Esophagus muscularis mucosa (tissue), 4 donors: ENCODE measurements at regions of chr1 and their contacts with region 1.

Region 1: DNA sequence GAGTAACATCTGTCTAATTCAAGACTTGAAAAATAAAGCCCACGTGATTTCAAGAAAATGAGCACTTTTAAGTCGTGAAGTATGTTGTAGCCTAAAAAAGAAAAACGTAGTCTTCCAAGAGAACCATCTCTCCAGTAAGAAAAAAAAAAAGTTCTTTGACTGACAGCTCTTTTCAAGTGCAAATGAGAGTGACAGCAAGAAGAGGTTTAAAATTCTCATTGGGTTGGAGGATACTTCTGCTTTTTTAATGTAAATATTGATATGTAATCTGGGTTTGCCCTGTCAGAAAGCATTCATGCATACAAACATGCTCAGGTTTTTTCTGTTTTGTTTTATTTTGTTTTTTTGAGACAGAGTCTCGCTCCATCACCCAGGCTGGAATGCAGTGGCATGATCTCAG is 32.3 kb upstream of the PRDM2 start:
- DNase-seq: no peak
- H3K4me3 ChIP-seq: no peak overlapping the region
- H3K27ac ChIP-seq: no peak overlapping the region
- H3K4me1 ChIP-seq: peaks cover 0 to 9% (median 5%) of the 10 kb centered on the region in 4 donors
- H3K27me3 ChIP-seq: peaks cover 0 to 13% (median 0%) of the 10 kb centered on the region in 4 donors
- CTCF ChIP-seq: no peak
- EP300 ChIP-seq: no peak
- POLR2A ChIP-seq: no peak

Region 2: DNA sequence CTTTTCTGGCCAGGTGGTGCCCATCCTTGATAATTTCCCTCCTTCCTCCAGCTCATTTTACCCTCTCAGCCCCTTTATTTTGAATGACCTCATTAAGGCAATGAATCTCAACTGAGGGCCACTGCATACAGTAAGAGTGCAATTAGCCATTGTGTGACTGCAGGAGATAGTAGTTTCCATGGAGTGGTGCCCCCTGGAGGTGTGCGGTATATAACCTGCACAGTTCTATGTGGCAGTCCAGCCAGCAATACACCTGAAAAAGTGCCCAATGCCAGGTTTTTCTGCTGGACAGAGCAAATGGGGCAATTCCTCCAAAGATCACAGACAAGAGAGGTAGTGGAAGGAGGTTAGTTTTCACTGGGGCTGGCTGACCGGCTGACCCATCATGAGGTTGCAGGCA is 128.0 kb before region 1 on chr1:
- intact Hi-C with region 1: no loop called
- DNase-seq: no peak
- H3K4me3 ChIP-seq: no peak overlapping the region
- H3K27ac ChIP-seq: no peak overlapping the region
- H3K4me1 ChIP-seq: peaks cover 8 to 22% (median 20%) of the 10 kb centered on the region in 4 donors
- H3K27me3 ChIP-seq: no peaks in the 10 kb centered on the region
- CTCF ChIP-seq: no peak
- EP300 ChIP-seq: no peak
- POLR2A ChIP-seq: no peak

Region 3: DNA sequence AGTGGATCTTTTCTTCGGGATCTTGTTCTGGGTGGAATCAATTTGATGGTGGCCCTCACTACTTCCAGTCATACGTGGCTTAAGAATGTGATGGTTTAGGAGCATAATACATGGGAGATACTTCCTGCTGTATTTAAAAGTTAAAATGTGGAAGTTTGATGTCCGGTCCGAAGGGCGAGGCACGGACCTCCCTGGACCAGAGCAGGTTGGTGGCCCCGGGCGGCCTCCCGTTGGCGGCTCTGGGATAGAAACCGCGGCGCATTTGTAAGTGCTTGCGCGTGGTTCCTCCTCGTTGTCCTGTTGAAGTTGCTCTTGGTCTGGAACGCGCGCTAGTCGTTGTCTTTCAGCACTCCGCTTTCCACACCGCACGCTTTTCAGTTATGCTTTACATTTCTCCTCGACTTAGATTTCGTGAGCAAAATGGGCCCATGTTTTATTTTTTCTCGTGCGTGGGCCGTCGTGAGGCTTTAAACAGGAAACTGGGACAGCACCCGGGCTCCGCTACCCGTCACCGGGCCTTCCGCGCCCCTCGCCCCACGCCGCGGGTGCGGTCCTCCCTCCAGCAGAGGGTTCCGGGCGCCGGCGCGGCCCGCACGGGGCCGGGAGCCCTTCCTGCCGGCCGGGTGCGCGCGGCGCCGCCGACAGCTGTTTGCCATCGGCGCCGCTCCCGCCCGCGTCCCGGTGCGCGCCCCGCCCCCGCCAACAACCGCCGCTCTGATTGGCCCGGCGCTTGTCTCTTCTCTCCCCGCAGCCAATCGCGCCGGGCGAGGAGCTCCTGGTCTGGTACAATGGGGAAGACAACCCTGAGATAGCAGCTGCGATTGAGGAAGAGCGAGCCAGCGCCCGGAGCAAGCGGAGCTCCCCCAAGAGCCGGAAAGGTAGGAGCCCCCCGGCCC is 81.2 kb after region 1 on chr1:
- intact Hi-C with region 1: no loop called
- DNase-seq: peak; percentile 99
- H3K4me3 ChIP-seq: peak overlapping the region; percentile 64 to 97 (median 89)
- H3K27ac ChIP-seq: peak overlapping the region; percentile 89 to 97 (median 96)
- H3K4me1 ChIP-seq: peaks cover 29 to 45% (median 44%) of the 10 kb centered on the region in 4 donors
- H3K27me3 ChIP-seq: no peaks in the 10 kb centered on the region
- CTCF ChIP-seq: peak in 2 of 3 experiments; percentile 10 to 30
- EP300 ChIP-seq: no peak
- POLR2A ChIP-seq: peak; percentile 43

Region 4: GRCh38 chr1:13813398-13814012 is 145.8 kb after region 1 on chr1:
- intact Hi-C with region 1: loop called (anchors 5 kb)
- DNase-seq: no peak
- H3K4me3 ChIP-seq: no peak overlapping the region
- H3K27ac ChIP-seq: no peak overlapping the region
- H3K4me1 ChIP-seq: peaks cover 3 to 10% (median 3%) of the 10 kb centered on the region in 4 donors
- H3K27me3 ChIP-seq: no peaks in the 10 kb centered on the region
- CTCF ChIP-seq: peak; percentile 49 to 67 (median 54)
- EP300 ChIP-seq: no peak
- POLR2A ChIP-seq: no peak

Region 5: GRCh38 chr1:13842497-13842896 is 174.8 kb after region 1 on chr1:
- intact Hi-C with region 1: no loop called
- DNase-seq: no peak
- H3K4me3 ChIP-seq: no peak overlapping the region
- H3K27ac ChIP-seq: no peak overlapping the region
- H3K4me1 ChIP-seq: no peaks in the 10 kb centered on the region
- H3K27me3 ChIP-seq: no peaks in the 10 kb centered on the region
- CTCF ChIP-seq: no peak
- EP300 ChIP-seq: no peak
- POLR2A ChIP-seq: no peak